ENCODE measurements at regions of chr7 and their contacts with region 1.

Region 1: DNA sequence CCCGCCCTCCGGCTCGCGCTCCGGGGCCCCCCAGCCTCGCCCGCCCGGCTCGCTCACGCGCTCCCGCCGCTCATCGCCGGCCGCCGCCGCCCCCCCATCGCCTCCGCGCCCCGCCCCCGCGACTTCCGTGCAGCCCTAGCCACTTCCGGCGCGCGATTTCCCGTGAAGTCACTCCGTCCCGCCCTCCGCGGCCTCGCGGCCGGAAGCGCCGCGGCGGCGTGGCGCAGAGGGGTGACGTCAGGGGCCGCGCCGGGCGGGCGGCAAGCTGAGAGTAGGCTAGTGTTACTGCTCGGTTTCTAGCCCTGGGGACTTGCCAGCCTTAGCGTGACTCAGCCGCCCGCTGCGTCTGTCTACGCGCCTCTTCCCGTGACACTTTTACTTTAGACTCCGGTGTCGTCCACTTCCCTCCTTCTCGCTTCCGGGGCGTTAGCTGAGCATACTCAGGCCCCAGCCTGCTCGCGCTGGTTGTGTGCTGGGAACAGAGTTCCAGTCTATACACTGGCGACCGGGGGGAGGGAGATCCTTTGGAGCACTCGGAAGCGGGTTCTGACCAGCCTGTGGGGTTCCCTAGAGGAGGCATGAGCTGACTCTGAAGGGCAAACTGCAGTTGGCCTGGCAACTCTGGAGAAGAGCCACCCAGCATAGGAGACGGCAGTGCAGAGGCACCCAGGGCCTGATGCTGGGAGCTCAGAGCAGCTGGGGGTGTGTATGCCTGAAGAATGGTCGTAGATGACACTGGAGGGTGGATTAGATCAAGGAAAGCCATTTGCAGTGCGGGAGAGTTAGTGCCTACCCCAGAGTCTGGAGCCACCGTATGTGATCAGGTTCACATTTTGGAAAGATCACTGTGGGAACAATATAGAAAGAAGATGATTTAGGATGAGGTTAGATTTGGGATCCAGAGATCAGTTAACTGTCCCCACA is at the start of gene PURB:
- DNase-seq: peak; percentile 98
- ATAC-seq: peak; percentile 85
- H3K4me3 Mint-ChIP-seq: peak within 1 kb of the TSS; percentile 95
- H3K27ac Mint-ChIP-seq: peak within 1 kb of the TSS; percentile 99
- H3K4me1 Mint-ChIP-seq: peaks cover 59% of the 10 kb centered on the region
- H3K27me3 Mint-ChIP-seq: no peaks in the 10 kb centered on the region
- CTCF ChIP-seq: no peak
- total RNA-seq, gene PURB: 21.3 and 23.8 TPM in 2 replicates

Region 2: GRCh38 chr7:44490351-44491200 is 395.1 kb before region 1 on chr7 and contains the start of gene NUDCD3:
- CTCF ChIA-PET with region 1: no interaction called
- POLR2A ChIA-PET with region 1: no interaction called
- intact Hi-C with region 1: loop called (anchors 1 kb)
- DNase-seq: peak; percentile 80
- ATAC-seq: peak; percentile 84
- H3K4me3 Mint-ChIP-seq: peak within 1 kb of the TSS; percentile 90
- H3K27ac Mint-ChIP-seq: peak within 1 kb of the TSS; percentile 97
- H3K4me1 Mint-ChIP-seq: peaks cover 46% of the 10 kb centered on the region
- H3K27me3 Mint-ChIP-seq: peaks cover 5% of the 10 kb centered on the region
- CTCF ChIP-seq: no peak
- total RNA-seq, gene NUDCD3: 80.7 and 85.1 TPM in 2 replicates

Region 3: GRCh38 chr7:44581879-44582603 is 303.6 kb before region 1 on chr7 and contains the start of gene TMED4:
- CTCF ChIA-PET with region 1: no interaction called
- POLR2A ChIA-PET with region 1: interaction called, 10 read pairs
- intact Hi-C with region 1: loop called (anchors 1 kb)
- DNase-seq: peak; percentile 100
- ATAC-seq: peak; percentile 90
- H3K4me3 Mint-ChIP-seq: peak within 1 kb of the TSS; percentile 90
- H3K27ac Mint-ChIP-seq: peak within 1 kb of the TSS; percentile 95
- H3K4me1 Mint-ChIP-seq: peaks cover 29% of the 10 kb centered on the region
- H3K27me3 Mint-ChIP-seq: peaks cover 2% of the 10 kb centered on the region
- CTCF ChIP-seq: no peak
- total RNA-seq, gene TMED4: 61.7 and 70.1 TPM in 2 replicates

Region 4: GRCh38 chr7:44638611-44639557 is 246.8 kb before region 1 on chr7:
- CTCF ChIA-PET with region 1: no interaction called
- POLR2A ChIA-PET with region 1: interaction called, 11 read pairs
- intact Hi-C with region 1: loop called (anchors 1 kb)
- DNase-seq: peak; percentile 69
- ATAC-seq: peak; percentile 82
- H3K4me3 Mint-ChIP-seq: peak overlapping the region; percentile 84
- H3K27ac Mint-ChIP-seq: peak overlapping the region; percentile 97
- H3K4me1 Mint-ChIP-seq: peaks cover 64% of the 10 kb centered on the region
- H3K27me3 Mint-ChIP-seq: no peaks in the 10 kb centered on the region
- CTCF ChIP-seq: no peak

Region 5: GRCh38 chr7:44858161-44858560 is 27.5 kb before region 1 on chr7:
- CTCF ChIA-PET with region 1: interaction called, 10 read pairs
- POLR2A ChIA-PET with region 1: interaction called, 13 read pairs
- intact Hi-C with region 1: loop called (anchors 2 kb)
- DNase-seq: no peak
- ATAC-seq: no peak
- H3K4me3 Mint-ChIP-seq: no peak overlapping the region
- H3K27ac Mint-ChIP-seq: no peak overlapping the region
- H3K4me1 Mint-ChIP-seq: peaks cover 4% of the 10 kb centered on the region
- H3K27me3 Mint-ChIP-seq: peaks cover 2% of the 10 kb centered on the region
- CTCF ChIP-seq: no peak

Region 6: DNA sequence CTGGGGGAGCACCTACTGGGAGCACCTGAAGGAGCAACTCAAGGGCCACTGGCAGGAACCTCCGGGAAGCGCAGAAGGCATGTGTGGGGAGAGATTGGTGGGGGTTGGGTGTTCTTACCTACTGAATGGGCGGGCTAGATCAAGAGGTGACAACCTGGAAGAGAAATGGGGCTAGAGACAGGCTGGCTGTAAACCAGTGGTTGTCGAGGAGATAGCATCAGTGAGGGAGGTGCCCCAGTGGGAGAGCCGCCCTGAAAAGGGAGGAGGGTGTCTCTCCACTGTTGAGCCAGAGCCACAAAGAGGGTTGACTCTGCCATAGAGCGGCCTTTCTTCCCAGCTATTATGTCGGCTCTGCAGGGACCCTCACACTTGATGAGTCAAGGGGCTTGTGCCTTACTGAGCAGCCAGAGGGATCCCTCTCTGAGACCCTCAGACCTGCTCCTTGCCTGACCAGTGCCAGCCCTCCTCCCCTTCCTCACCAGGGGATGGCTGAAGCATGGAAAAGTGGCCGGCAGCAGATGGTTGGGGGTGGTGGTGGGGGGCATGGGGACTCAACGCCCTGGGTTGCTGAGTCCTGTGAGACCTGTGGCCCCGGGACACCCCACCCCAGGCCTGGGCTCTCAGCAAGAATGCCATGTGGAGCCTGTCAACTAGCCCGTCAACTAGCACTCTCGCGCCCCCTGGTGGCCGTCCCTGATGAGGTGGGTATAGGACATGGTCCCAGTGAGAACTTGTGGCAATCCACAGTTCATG is 36.1 kb after region 1 on chr7:
- CTCF ChIA-PET with region 1: interaction called, 7 read pairs
- POLR2A ChIA-PET with region 1: interaction called, 6 read pairs
- intact Hi-C with region 1: loop called (anchors 2 kb)
- DNase-seq: peak; percentile 89
- ATAC-seq: peak; percentile 98
- H3K4me3 Mint-ChIP-seq: no peak overlapping the region
- H3K27ac Mint-ChIP-seq: no peak overlapping the region
- H3K4me1 Mint-ChIP-seq: peaks cover 3% of the 10 kb centered on the region
- H3K27me3 Mint-ChIP-seq: no peaks in the 10 kb centered on the region
- CTCF ChIP-seq: no peak

Region 7: DNA sequence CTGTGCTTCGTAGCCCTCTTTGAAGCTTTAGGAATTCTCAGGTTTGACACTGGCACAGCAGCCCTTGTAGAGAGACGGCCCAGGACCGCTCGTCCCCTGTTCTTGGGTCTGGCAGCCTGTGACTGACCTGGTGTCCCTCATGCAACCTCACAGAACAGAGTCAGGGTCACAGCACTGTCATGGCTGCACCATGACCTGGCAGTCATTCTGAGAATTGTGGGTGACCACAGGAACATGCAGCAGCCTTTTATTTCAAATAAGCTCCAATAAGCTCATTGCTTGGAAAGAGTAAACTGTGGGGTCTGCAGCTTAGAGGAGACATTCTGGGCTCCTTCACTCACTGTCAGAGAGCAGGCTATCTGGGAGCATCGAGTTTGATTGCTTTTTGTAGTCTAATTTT is 50.7 kb after region 1 on chr7:
- CTCF ChIA-PET with region 1: no interaction called
- POLR2A ChIA-PET with region 1: no interaction called
- intact Hi-C with region 1: no loop called
- DNase-seq: no peak
- ATAC-seq: no peak
- H3K4me3 Mint-ChIP-seq: no peak overlapping the region
- H3K27ac Mint-ChIP-seq: no peak overlapping the region
- H3K4me1 Mint-ChIP-seq: no peaks in the 10 kb centered on the region
- H3K27me3 Mint-ChIP-seq: no peaks in the 10 kb centered on the region
- CTCF ChIP-seq: no peak

Region 8: DNA sequence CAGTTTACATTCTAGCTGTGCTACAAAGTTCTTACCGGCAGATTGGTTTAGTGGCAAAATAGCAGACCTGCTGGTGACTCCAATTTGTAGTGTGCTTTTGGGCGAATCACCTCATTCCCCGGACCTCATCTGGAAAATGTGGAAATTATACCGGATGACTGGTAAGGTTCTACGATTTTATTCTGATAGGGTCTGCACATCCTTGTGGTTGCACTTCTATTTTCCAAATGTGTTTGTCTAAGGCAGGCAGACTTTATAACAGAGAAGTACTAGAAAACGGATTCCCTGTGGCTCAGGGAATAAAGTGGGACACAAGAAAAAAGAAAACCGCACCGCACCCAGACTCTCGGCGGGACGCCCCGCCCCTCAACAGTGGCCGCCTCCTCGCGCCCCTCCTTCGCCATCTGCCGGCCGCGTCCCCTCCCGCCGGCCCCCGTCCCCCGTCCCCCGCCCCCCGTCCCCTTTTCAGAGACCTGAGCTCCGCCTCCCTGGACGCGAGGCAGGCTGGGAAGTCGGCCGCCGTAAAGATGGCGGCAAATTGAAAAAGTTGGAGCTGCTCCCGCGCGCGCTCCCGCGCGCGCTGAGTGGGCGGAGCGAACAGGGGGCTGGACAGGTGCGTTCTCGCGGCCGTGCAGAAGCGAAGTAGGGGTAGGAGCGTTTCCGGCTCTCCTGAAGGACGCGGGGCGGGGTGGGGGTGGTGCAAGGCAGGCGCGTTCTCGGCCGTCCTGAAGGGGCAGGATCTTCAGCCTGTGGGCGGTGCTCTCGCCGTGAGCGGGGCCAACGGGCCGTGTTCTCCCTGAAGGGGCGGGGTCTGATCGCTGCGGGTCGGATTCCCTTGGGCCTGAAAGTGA is 113.8 kb after region 1 on chr7:
- CTCF ChIA-PET with region 1: no interaction called
- POLR2A ChIA-PET with region 1: interaction called, 17 read pairs
- intact Hi-C with region 1: loop called (anchors 1 kb)
- DNase-seq: peak; percentile 94
- ATAC-seq: peak; percentile 85
- H3K4me3 Mint-ChIP-seq: peak overlapping the region; percentile 95
- H3K27ac Mint-ChIP-seq: peak overlapping the region; percentile 94
- H3K4me1 Mint-ChIP-seq: peaks cover 60% of the 10 kb centered on the region
- H3K27me3 Mint-ChIP-seq: no peaks in the 10 kb centered on the region
- CTCF ChIP-seq: no peak